Calu3 (cell line): ENCODE measurements at regions of chr17 and their contacts with region 1.

Region 1: DNA sequence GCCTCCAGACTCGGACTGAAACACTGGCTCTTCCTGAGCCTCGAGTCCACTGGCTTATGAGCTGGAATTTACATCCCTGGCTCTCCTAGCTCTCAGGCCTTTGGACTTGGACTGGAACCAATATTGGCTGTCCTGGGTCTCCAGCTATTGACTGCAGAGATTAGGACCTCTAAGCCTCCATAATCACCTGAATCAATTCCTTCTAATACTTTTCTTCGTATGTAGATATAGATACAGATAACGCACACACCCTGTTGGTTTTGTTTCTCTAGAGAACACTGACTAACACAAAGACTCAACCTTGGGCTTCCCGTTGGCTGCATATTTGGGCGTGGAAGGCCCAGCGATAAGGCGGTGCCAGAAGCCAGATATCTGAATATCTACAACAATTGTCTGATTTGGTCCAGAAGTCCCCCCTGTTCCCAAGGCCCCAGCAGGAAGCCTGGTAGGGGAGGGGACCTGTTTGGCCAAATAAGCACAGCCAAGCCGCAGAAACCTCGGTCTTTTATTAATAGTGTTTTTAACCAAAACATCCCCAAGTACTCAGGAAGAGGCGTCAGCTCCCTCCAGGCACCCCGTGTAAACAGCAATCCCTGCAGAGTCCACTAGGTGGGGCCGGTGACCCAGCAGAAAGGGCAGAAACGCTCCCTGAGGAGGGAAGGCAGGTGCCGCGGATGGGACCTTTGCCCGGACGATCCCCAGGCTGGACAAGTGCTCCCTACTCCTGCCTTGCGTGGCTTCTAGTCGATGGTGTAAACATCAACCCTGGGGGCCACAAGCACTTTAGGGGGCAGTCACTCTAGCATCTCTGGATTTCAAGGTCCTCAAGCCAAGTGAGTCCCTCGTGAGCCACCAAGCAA is 57.0 kb downstream of the ABR start:
- DNase-seq: peak; percentile 88
- H3K4me3 Mint-ChIP-seq: no peak overlapping the region
- H3K27ac Mint-ChIP-seq: peak overlapping the region; percentile 47
- H3K4me1 Mint-ChIP-seq: no peaks in the 10 kb centered on the region
- H3K27me3 Mint-ChIP-seq: no peaks in the 10 kb centered on the region
- CTCF ChIP-seq: peak; percentile 71

Region 2: DNA sequence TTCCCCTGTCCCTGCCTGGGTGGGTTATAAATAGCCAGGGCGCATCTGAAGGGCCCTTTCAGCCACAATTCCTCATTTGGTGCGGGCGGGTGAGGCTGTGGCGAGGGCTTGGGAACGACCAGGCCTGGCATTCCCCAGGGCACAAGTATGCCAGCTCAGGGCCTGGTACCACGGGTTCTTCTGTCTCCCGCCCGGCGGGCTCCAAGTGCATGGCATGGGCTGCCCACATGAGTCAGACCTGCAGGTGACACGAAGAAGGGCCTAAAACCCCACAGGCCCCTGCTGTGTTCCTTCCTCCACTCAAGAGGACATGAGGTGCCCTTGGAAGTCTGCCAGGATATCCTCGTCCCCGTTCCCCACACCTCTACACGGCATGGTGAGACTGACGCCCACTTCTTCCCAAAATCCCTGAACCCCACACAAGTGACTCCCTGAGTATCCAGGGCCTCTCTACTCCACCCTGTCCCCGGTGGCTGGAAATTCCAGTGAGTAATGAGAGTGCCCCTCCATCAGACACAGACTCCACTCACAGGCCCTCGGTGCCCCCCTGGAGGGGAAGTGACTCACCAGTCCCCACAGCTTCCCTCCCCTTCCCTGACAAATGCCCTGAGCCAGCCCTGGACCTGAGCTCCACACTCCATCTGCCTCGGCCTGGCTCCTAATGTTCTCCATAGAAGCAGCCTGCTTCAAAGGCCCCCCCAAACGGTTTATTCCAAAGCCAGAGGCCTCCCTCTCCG is 11.7 kb before region 1 on chr17:
- CTCF ChIA-PET with region 1: interaction called, 10 read pairs
- intact Hi-C with region 1: no loop called
- DNase-seq: peak; percentile 84
- H3K4me3 Mint-ChIP-seq: peak overlapping the region; percentile 86
- H3K27ac Mint-ChIP-seq: peak overlapping the region; percentile 98
- H3K4me1 Mint-ChIP-seq: peaks cover 38% of the 10 kb centered on the region
- H3K27me3 Mint-ChIP-seq: no peaks in the 10 kb centered on the region
- CTCF ChIP-seq: no peak

Region 3: GRCh38 chr17:1186923-1187771 is 64.4 kb after region 1 on chr17:
- CTCF ChIA-PET with region 1: interaction called, 17 read pairs
- intact Hi-C with region 1: loop called (anchors 10 kb)
- DNase-seq: peak; percentile 84
- H3K4me3 Mint-ChIP-seq: no peak overlapping the region
- H3K27ac Mint-ChIP-seq: no peak overlapping the region
- H3K4me1 Mint-ChIP-seq: peaks cover 15% of the 10 kb centered on the region
- H3K27me3 Mint-ChIP-seq: peaks cover 13% of the 10 kb centered on the region
- CTCF ChIP-seq: peak; percentile 76

Region 4: GRCh38 chr17:1331708-1332107 is 208.9 kb after region 1 on chr17:
- CTCF ChIA-PET with region 1: no interaction called
- intact Hi-C with region 1: loop called (anchors 10 kb)
- DNase-seq: no peak
- H3K4me3 Mint-ChIP-seq: no peak overlapping the region
- H3K27ac Mint-ChIP-seq: no peak overlapping the region
- H3K4me1 Mint-ChIP-seq: no peaks in the 10 kb centered on the region
- H3K27me3 Mint-ChIP-seq: no peaks in the 10 kb centered on the region
- CTCF ChIP-seq: no peak